Activated T-helper 2 cell treated with anti-CD3 and anti-CD28 coated beads, Interferon-gamma antibody, Interleukin-2, Interleukin-4, amounts not matched to agents 10 μg/mL and 5 μg/mL and 100 μg/mL, durations not matched to agents 14 hours and 24 hours and 36 hours (primary cell): ENCODE measurements at regions of chr2 and their contacts with region 1.

Region 1: DNA sequence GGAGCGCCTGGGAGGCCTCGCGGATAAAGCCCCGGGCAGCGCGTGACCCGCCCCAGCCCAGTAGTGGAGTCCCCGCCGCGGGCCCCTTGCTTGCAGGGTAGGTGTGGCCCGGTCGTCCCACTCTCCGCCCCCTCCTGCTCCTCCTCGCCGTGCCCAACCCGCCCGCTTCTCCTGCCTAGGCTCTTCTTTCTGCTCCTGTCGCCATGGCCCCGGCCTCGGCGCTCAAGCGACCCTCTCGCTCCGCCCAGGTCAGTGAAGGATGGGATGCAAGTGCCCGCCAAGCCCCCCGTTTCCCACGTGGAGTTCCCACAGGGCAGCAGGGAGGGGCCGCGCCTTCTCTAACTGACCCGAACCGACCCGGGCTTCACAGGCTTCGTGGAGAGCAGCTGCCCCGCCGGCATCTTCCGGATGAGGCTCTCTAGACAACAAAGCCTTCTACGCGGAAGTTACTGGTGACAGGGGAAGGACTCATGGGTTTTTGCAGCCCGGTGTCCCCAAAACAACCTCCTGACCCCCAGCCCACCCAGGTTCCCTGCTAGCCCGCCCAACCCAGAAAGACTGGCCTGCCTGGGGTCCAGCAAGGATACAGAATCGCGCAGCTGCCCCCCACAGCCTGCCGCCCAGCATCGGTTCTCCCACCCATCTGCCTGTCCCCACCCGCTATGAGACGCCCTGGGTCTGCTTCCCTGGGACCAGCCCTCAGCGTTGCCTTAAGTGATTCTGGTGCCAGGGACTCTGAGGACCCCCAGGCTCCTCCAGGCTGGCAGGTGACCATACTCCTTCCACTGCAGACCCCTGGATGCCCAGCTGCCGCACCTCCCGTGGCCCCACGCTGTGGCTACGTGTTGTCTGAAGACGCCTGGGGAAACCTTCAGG is 32.8 kb downstream of the TTC32 start:
- DNase-seq: peak; percentile 51
- H3K4me3 Mint-ChIP-seq: peak overlapping the region; percentile 84
- H3K27ac Mint-ChIP-seq: peak overlapping the region; percentile 83
- H3K4me1 Mint-ChIP-seq: peaks cover 22% of the 10 kb centered on the region
- H3K27me3 Mint-ChIP-seq: no peaks in the 10 kb centered on the region

Region 2: GRCh38 chr2:18387441-18388206 is 1481.3 kb before region 1 on chr2:
- intact Hi-C with region 1: loop called (anchors 5 kb)
- DNase-seq: peak; percentile 30
- H3K4me3 Mint-ChIP-seq: no peak overlapping the region
- H3K27ac Mint-ChIP-seq: no peak overlapping the region
- H3K4me1 Mint-ChIP-seq: no peaks in the 10 kb centered on the region
- H3K27me3 Mint-ChIP-seq: peaks cover 3% of the 10 kb centered on the region

Region 3: DNA sequence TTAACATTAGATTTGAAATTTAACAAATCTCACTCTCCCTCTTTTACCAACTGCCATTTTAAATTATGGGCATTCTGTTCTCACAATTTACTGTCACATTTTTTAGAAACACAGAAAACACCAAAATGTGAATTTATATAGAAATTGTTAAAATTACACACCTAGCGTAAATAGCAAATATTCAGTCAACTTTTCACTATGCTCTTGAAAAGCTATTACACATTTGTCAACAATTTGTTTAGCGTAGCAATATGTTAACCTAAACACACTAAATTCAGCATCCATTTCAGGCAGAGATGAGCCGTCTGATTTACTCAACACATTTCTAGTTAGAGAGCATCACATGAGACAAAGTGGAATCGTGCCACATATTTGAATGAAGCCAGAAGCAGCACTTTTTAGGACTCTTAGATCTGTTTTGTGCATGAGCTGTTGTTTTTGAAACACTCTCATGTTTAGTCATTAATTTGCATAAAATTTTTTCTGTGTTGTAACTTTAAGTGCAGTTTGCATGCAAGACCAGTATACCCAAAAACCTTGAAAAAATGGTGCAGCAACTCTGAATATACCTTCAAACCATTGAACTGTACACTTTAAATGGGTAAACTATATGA is 24.7 kb after region 1 on chr2:
- intact Hi-C with region 1: loop called (anchors 2 kb)
- DNase-seq: no peak
- H3K4me3 Mint-ChIP-seq: no peak overlapping the region
- H3K27ac Mint-ChIP-seq: no peak overlapping the region
- H3K4me1 Mint-ChIP-seq: peaks cover 48% of the 10 kb centered on the region
- H3K27me3 Mint-ChIP-seq: no peaks in the 10 kb centered on the region

Region 4: DNA sequence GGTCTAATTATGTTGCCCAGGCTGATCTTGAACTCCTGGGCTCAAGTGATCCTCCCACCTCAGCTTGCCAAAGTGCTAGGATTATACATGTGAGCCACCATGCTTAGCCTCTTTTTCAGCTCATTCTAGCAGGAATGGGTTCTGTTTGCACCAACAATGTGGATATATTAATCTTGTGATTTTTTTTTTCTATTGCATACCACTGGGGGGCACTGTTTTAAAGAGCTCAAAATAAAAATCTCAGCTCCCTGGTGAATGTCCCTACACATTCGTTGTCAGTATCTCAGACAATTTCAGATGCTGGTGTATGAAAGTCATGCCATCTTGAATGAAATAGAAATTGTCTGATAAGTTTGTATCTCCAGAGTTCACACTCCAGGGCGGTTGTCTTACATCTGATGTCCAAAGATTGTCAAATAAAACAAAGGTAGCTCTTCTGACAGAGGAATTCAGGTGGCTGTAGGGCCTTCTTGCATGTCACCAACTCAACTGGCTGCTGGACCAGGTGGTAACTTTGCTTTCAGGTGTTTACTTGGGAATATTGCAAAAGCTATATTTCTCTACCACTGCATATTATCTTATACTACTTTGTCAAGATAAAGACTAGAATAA is 146.6 kb after region 1 on chr2:
- intact Hi-C with region 1: no loop called
- DNase-seq: no peak
- H3K4me3 Mint-ChIP-seq: no peak overlapping the region
- H3K27ac Mint-ChIP-seq: no peak overlapping the region
- H3K4me1 Mint-ChIP-seq: peaks cover 3% of the 10 kb centered on the region
- H3K27me3 Mint-ChIP-seq: peaks cover 39% of the 10 kb centered on the region